Esophagus muscularis mucosa (tissue), 4 donors: ENCODE measurements at regions of chr3 and their contacts with region 1.

Region 1: DNA sequence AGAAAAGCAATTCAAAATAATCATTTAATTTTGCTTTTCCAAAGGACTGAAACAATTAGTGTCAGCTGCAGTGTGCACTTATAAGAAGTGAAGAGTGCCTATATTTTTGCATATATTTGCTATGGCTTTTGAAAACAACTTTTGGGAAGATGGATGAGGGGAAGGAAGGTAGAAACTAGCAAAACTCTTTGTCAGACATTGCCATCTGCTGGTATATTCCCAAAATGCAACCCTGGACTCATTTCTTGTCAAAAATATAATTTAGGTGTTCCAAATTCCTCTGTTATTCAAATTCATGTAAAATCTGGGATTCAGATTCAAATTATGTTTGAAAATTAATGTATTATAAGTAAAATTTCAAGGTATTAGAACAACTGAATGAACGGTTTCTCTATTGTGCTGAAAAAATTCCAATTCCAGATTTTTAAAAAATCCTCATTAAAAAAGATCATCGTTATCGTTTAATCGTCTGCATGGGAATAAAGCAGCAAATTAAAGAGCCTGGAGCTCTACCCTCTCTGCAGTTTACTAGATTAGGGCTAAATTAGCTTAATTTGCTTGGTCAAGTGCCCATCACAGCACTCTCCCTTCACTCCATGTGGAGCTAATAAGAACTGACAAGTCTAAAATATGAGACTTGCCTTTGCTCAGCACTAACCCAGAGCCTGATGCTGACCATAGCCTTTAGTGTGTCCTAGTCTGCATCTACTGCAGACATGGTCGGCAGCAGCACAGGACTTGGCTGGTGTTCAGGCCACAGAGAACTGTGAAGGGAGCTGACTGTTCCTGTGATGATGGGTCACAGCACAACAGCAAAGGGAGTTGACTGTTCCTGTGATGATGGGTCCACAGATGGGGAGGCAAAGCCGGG is 67.9 kb upstream of the MITF start:
- DNase-seq: no peak
- H3K4me3 ChIP-seq: no peak overlapping the region
- H3K27ac ChIP-seq: no peak overlapping the region
- H3K4me1 ChIP-seq: peaks cover 7 to 12% (median 9%) of the 10 kb centered on the region in 4 donors
- H3K27me3 ChIP-seq: no peaks in the 10 kb centered on the region
- CTCF ChIP-seq: peak; percentile 81 to 86 (median 83)
- EP300 ChIP-seq: no peak
- POLR2A ChIP-seq: no peak

Region 2: DNA sequence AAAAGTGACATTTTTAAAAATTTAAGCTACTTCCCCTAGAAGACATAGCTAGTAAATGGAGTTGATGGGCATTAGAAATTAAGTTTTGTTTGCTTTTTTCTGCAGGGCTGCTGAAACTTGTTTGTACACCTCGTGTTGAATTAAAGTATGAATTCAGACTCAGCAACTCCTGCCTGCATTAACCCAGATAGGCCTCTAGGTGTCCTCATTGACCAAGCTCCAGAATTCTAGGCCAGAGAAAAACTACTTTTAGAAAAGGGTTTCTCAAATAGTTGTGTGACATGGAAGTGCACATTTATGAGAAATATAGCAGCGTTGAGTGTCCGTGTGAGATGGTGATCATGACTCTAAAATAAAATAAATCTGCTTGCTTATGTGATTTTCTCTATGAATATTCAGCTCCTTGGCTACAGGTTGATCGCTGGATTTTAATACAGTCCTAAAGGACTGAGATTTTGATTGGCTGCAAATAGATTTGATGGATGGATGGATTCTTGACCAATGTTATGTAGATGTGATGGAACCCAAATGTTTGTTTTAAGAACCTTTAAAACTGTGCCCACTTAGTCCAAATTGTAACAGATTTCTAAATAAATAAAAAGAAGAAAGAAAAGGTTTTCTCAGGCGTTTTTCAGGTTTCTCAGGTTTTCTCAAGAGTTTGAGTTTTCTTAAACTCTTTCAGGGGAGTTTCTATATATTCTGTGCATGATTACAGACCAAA is 509.6 kb before region 1 on chr3:
- intact Hi-C with region 1: loop called (anchors 2 kb)
- DNase-seq: no peak
- H3K4me3 ChIP-seq: no peak overlapping the region
- H3K27ac ChIP-seq: no peak overlapping the region
- H3K4me1 ChIP-seq: no peaks in the 10 kb centered on the region
- H3K27me3 ChIP-seq: no peaks in the 10 kb centered on the region
- CTCF ChIP-seq: peak; percentile 93 to 96 (median 95)
- EP300 ChIP-seq: no peak
- POLR2A ChIP-seq: no peak

Region 3: GRCh38 chr3:69439643-69440270 is 231.6 kb before region 1 on chr3:
- intact Hi-C with region 1: loop called (anchors 5 kb)
- DNase-seq: no peak
- H3K4me3 ChIP-seq: no peak overlapping the region
- H3K27ac ChIP-seq: no peak overlapping the region
- H3K4me1 ChIP-seq: peaks cover 0 to 27% (median 17%) of the 10 kb centered on the region in 4 donors
- H3K27me3 ChIP-seq: no peaks in the 10 kb centered on the region
- CTCF ChIP-seq: peak; percentile 45 to 66 (median 56)
- EP300 ChIP-seq: no peak
- POLR2A ChIP-seq: no peak

Region 4: DNA sequence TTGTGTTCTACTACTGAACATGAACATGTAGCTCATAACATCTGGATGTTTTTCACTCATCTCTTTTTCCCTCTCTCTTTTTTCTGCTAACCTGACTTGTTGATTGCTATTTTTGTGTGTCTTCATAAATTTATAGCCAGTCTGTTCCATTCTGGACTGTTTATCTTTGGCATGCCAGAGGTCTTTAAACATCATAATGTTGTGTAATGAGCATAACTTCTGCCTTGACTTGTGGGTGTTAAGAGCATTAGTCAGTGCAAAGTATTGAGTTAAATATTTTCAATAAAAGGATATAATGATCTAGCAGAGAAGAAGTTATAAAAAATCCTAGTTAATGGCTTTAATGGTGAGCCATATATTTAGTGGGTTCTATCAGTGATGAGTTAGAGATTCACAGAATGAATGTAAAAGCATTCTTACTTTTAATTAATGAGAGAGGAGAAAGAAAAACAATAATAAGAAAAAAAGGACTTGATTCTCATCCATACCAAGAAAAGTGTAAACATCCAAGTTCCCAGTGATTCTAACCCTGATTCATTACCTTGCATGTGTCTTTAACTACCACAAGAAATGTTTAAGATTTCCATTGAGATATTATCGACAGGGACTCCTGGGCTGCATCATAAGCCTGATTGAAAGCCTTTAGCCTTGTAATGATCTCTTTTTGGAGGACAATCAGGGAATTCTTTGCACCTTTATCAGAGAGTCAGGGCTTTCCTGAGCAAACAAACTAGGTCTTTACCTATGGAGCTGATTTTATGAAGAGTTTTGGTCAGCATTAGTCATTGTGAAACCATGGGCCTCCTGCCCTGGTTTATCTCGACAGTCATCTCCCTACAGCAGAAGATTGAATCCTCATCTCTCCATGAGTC is 90.8 kb after region 1 on chr3:
- intact Hi-C with region 1: no loop called
- DNase-seq: peak; percentile 72
- H3K4me3 ChIP-seq: no peak overlapping the region
- H3K27ac ChIP-seq: peak overlapping the region; percentile 76 to 81 (median 78)
- H3K4me1 ChIP-seq: peaks cover 67 to 98% (median 87%) of the 10 kb centered on the region in 4 donors
- H3K27me3 ChIP-seq: no peaks in the 10 kb centered on the region
- CTCF ChIP-seq: no peak
- EP300 ChIP-seq: no peak
- POLR2A ChIP-seq: no peak